ENCODE measurements at regions of chr2 and their contacts with region 1.

Region 1: DNA sequence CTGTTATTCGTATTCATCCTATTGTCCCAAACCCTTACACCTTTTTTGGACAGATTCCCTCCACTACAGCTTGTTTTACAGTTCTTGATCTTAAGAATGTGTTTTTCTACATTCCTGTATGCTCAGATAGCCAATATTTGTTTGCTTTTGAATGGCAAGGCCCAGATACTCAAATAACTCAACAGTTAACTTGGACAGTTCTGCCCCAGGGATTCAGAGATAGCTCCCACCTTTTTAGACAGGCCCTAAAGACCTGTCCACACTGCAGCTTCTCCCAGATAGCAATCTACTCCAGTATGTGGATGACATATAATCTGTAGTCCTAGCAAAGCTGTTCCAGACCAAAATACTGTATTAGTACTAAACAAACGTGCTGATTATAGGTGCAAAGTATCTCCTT is 7.1 kb upstream of the AGXT start:
- DNase-seq: no peak
- H3K4me3 Mint-ChIP-seq: no peak overlapping the region
- H3K27ac Mint-ChIP-seq: no peak overlapping the region
- H3K4me1 Mint-ChIP-seq: no peaks in the 10 kb centered on the region
- H3K27me3 Mint-ChIP-seq: peaks cover 32% of the 10 kb centered on the region

Region 2: GRCh38 chr2:240851078-240851991 is 10.2 kb before region 1 on chr2:
- CTCF ChIA-PET with region 1: interaction called, 10 read pairs
- DNase-seq: peak; percentile 89
- H3K4me3 Mint-ChIP-seq: no peak overlapping the region
- H3K27ac Mint-ChIP-seq: no peak overlapping the region
- H3K4me1 Mint-ChIP-seq: no peaks in the 10 kb centered on the region
- H3K27me3 Mint-ChIP-seq: peaks cover 5% of the 10 kb centered on the region

Region 3: DNA sequence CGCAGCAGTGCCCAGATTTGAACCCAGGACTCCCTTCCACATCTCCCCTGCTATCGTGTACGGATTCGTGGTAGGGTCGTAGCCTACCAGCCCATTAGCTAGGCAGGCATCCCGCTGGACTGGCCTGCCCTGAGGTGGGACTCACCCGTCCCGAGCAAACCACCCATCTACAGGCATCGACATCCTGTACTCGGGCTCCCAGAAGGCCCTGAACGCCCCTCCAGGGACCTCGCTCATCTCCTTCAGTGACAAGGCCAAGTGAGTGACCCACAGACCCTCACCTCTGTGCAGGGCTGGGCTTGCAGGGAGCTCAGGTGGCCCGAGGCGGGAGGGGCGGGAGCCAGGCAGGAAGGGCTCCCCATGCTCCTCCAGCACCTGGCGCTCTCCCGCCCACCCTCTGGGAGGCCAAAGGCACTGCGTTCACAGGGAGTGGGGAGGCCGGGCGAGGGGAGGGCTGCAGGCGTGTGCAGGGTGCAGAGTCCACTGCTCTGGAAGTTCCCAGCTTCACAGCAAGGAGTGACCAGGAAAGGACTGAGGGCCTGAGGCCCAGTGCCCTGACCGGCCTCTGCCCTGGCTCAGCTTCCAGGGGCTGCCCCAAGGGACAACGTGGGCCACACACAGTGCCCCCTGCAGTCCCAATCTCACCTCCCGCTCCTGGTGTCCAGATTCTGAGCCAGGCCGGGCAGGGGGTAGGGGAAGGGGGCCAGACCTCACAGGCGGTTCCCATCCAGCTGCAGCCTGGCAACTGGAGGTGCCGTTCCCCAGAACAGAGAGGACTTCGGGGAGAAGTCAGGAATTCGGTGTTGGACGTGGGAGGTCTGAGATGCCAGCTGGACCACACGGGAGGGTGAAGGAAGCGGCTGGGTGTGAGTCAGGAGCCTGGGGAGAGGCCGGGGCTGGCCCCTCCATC is 12.5 kb after region 1 on chr2:
- CTCF ChIA-PET with region 1: no interaction called
- DNase-seq: no peak
- H3K4me3 Mint-ChIP-seq: no peak overlapping the region
- H3K27ac Mint-ChIP-seq: no peak overlapping the region
- H3K4me1 Mint-ChIP-seq: no peaks in the 10 kb centered on the region
- H3K27me3 Mint-ChIP-seq: no peaks in the 10 kb centered on the region